ENCODE measurements at regions of chr3 and their contacts with region 1.

Region 1: GRCh38 chr3:118628704-118629341 is 405.8 kb downstream of the IGSF11 start:
- DNase-seq: peak; percentile 59 to 73
- ATAC-seq: peak; percentile 98 to 99
- H3K4me3 ChIP-seq: no peak overlapping the region
- H3K27ac ChIP-seq: no peak overlapping the region
- H3K4me1 ChIP-seq: no peaks in the 10 kb centered on the region
- CTCF ChIP-seq: peak; percentile 67
- EP300 ChIP-seq: no peak
- POLR2A ChIP-seq: no peak
- RAD21 ChIP-seq: peak; percentile 79 to 89

Region 2: DNA sequence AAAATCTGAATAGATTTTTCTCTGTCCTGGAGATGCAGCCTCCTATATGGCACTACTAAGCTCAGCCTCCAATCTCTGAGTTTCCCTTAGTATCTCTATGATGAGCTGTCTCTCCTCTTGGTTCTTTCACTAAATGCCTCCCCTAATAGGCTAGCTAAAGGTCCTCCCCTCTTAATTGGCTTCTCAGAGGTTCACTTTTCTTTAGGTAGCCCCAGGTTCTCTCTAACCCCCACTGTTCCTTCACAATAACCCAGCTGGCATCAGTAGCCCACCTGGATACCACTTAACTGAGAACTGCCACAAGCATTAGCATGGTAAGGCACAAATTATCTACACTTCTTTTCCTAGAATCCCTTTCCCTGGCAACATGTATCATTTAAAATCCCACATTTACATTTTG is 117.4 kb before region 1 on chr3:
- CTCF ChIA-PET with region 1: no interaction called
- POLR2A ChIA-PET with region 1: no interaction called
- DNase-seq: no peak
- ATAC-seq: no peak
- H3K4me3 ChIP-seq: no peak overlapping the region
- H3K27ac ChIP-seq: no peak overlapping the region
- H3K4me1 ChIP-seq: no peaks in the 10 kb centered on the region
- CTCF ChIP-seq: no peak
- EP300 ChIP-seq: no peak
- POLR2A ChIP-seq: no peak
- RAD21 ChIP-seq: no peak

Region 3: DNA sequence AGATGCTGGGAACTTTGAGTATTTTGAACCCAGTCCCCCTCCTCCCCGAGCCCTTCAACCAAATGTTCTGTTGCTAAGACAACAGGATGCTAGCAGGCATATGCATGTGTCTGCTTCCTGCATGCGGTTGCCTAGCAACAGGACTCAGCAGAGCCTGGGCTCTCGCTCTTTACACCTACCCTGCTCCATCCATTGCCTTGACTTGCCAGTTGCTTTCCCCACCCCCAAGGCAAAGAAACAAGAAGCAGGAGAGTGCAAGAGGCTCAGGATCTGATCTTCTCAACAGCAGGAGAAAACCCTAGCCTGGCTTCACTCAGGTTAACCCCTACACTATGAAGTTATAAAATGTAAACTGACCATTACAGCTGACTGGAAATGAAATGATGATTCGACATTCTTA is 12.8 kb after region 1 on chr3:
- CTCF ChIA-PET with region 1: interaction called, 11 read pairs
- POLR2A ChIA-PET with region 1: no interaction called
- DNase-seq: peak in 1 of 2 experiments; percentile 1
- ATAC-seq: no peak
- H3K4me3 ChIP-seq: no peak overlapping the region
- H3K27ac ChIP-seq: no peak overlapping the region
- H3K4me1 ChIP-seq: no peaks in the 10 kb centered on the region
- CTCF ChIP-seq: no peak
- EP300 ChIP-seq: no peak
- POLR2A ChIP-seq: no peak
- RAD21 ChIP-seq: no peak

Region 4: GRCh38 chr3:118692416-118692815 is 63.6 kb after region 1 on chr3:
- CTCF ChIA-PET with region 1: no interaction called
- POLR2A ChIA-PET with region 1: no interaction called
- DNase-seq: no peak
- ATAC-seq: no peak
- H3K4me3 ChIP-seq: no peak overlapping the region
- H3K27ac ChIP-seq: no peak overlapping the region
- H3K4me1 ChIP-seq: no peaks in the 10 kb centered on the region
- CTCF ChIP-seq: no peak
- EP300 ChIP-seq: no peak
- POLR2A ChIP-seq: no peak
- RAD21 ChIP-seq: no peak